Mammary epithelial cell (primary cell): ENCODE measurements at regions of chr20 and their contacts with region 1.

Region 1: DNA sequence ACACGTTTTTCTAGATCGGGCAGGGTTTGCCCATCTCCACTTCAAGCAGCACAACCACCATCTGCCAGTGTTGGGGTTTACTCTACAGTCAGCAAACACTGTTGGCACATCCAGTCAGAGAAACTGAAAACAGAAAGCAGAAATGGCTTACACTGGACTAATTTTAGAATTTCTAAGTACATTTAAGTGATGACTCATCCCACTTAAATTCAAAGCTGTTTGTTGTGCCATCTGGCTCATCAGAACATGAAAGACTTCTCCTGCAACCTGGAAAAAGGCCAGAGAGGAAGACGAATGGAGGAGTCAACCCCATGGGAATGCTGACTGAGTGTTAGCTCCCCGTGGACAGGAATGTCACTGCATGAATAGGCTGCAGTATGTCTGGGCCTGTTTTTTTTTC is 21.8 kb downstream of the FAM209B start:
- DNase-seq: peak; percentile 95
- H3K4me3 ChIP-seq: no peak overlapping the region
- H3K27ac ChIP-seq: no peak overlapping the region
- H3K4me1 ChIP-seq: peaks cover 17% of the 10 kb centered on the region
- H3K27me3 ChIP-seq: no peaks in the 10 kb centered on the region
- CTCF ChIP-seq: peak; percentile 16 to 21

Region 2: GRCh38 chr20:56439771-56440291 is 115.0 kb before region 1 on chr20:
- CTCF ChIA-PET with region 1: no interaction called
- dilution Hi-C with region 1: no loop called
- in situ Hi-C with region 1: no loop called
- intact Hi-C with region 1: no loop called
- DNase-seq: peak; percentile 37
- H3K4me3 ChIP-seq: no peak overlapping the region
- H3K27ac ChIP-seq: no peak overlapping the region
- H3K4me1 ChIP-seq: no peaks in the 10 kb centered on the region
- H3K27me3 ChIP-seq: no peaks in the 10 kb centered on the region
- CTCF ChIP-seq: no peak

Region 3: DNA sequence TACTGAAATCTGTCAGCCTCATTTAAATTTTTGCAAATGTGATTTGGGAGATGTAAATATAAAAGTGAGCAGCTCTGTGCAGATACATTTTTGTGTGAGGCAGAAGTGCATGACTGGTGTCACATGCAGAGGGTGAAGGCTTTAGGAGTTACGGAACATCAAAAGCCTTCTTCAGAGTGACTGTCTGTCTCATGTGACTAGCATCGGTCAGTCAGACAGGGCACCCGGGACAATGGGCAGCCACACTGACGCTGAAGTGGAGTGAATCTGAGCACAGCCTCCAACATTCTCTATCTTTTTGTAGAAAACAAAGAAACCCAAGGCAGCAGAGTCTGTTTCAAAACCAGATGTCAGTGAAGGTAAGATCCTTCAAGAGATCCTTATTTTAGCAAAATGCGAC is 38.2 kb before region 1 on chr20:
- CTCF ChIA-PET with region 1: no interaction called
- dilution Hi-C with region 1: no loop called
- in situ Hi-C with region 1: no loop called
- intact Hi-C with region 1: no loop called
- DNase-seq: no peak
- H3K4me3 ChIP-seq: no peak overlapping the region
- H3K27ac ChIP-seq: no peak overlapping the region
- H3K4me1 ChIP-seq: no peaks in the 10 kb centered on the region
- H3K27me3 ChIP-seq: no peaks in the 10 kb centered on the region
- CTCF ChIP-seq: no peak

Region 4: GRCh38 chr20:56587307-56588108 is 32.6 kb after region 1 on chr20:
- CTCF ChIA-PET with region 1: no interaction called
- dilution Hi-C with region 1: no loop called
- in situ Hi-C with region 1: no loop called
- intact Hi-C with region 1: no loop called
- DNase-seq: peak; percentile 7
- H3K4me3 ChIP-seq: no peak overlapping the region
- H3K27ac ChIP-seq: no peak overlapping the region
- H3K4me1 ChIP-seq: peaks cover 2% of the 10 kb centered on the region
- H3K27me3 ChIP-seq: no peaks in the 10 kb centered on the region
- CTCF ChIP-seq: no peak

Region 5: DNA sequence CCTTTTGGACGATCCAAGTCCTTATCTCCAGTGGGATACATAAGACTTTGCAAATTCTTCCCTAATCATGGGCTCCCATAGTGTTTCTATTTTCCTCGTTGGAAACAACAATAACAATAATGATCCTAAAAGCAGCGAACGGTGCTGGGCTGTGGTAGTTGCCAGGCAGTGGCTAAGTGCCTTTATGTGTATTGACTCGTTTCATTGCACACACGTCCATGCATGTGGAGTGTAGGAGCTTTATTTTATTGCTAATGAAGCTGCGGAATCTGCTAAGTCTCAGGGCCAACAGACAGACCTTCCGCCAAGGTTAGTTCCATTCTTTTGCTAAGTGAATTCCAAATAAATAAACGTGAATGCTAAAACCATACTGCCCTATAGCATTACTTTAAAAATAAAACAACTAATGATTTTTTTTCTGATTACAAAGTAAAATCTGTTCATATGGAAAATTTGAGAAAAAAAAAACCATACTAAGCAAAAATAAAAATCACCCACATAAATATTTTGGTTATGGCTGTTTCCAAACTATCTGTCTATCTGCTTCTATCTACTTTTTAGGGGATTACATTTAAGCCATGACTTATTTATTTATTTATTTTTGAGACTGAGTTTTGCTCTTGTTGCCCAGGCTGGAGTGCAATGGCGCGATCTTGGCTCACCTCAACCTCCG is 413.6 kb after region 1 on chr20:
- CTCF ChIA-PET with region 1: no interaction called
- dilution Hi-C with region 1: no loop called
- in situ Hi-C with region 1: loop called in 1 of 2 experiments (anchors 10 kb)
- intact Hi-C with region 1: loop called (anchors 1 kb)
- DNase-seq: no peak
- H3K4me3 ChIP-seq: no peak overlapping the region
- H3K27ac ChIP-seq: no peak overlapping the region
- H3K4me1 ChIP-seq: no peaks in the 10 kb centered on the region
- H3K27me3 ChIP-seq: peaks cover 2% of the 10 kb centered on the region
- CTCF ChIP-seq: no peak

Region 6: GRCh38 chr20:57048027-57048869 is 493.4 kb after region 1 on chr20:
- CTCF ChIA-PET with region 1: no interaction called
- dilution Hi-C with region 1: no loop called
- in situ Hi-C with region 1: no loop called
- intact Hi-C with region 1: loop called (anchors 2 kb)
- DNase-seq: peak; percentile 37
- H3K4me3 ChIP-seq: no peak overlapping the region
- H3K27ac ChIP-seq: no peak overlapping the region
- H3K4me1 ChIP-seq: peaks cover 19% of the 10 kb centered on the region
- H3K27me3 ChIP-seq: no peaks in the 10 kb centered on the region
- CTCF ChIP-seq: peak; percentile 76 to 78

Region 7: GRCh38 chr20:57080788-57081187 is 525.9 kb after region 1 on chr20:
- CTCF ChIA-PET with region 1: interaction called, 3 read pairs
- dilution Hi-C with region 1: no loop called
- in situ Hi-C with region 1: no loop called
- intact Hi-C with region 1: loop called (anchors 1 kb)
- DNase-seq: peak; percentile 33
- H3K4me3 ChIP-seq: no peak overlapping the region
- H3K27ac ChIP-seq: no peak overlapping the region
- H3K4me1 ChIP-seq: no peaks in the 10 kb centered on the region
- H3K27me3 ChIP-seq: no peaks in the 10 kb centered on the region
- CTCF ChIP-seq: peak; percentile 14 to 46